ENCODE measurements at regions of chr5 and their contacts with region 1.

Region 1: GRCh38 chr5:175873088-175873454 is 1.7 kb downstream of the CPLX2 start:
- DNase-seq: peak; percentile 84
- ATAC-seq: peak; percentile 33
- H3K4me3 Mint-ChIP-seq: peak overlapping the region; percentile 64
- H3K27ac Mint-ChIP-seq: no peak overlapping the region
- H3K4me1 Mint-ChIP-seq: peaks cover 41% of the 10 kb centered on the region
- H3K27me3 Mint-ChIP-seq: peaks cover 32% of the 10 kb centered on the region
- CTCF ChIP-seq: peak; percentile 30; the same call in 1 of the 2 replicates

Region 2: GRCh38 chr5:175638305-175638704 is 234.8 kb before region 1 on chr5:
- CTCF ChIA-PET with region 1: no interaction called
- POLR2A ChIA-PET with region 1: no interaction called
- DNase-seq: no peak
- ATAC-seq: peak; percentile 78
- H3K4me3 Mint-ChIP-seq: no peak overlapping the region
- H3K27ac Mint-ChIP-seq: peak overlapping the region; percentile 42
- H3K4me1 Mint-ChIP-seq: peaks cover 47% of the 10 kb centered on the region
- H3K27me3 Mint-ChIP-seq: no peaks in the 10 kb centered on the region; the same call in 1 of the 2 replicates
- CTCF ChIP-seq: no peak

Region 3: DNA sequence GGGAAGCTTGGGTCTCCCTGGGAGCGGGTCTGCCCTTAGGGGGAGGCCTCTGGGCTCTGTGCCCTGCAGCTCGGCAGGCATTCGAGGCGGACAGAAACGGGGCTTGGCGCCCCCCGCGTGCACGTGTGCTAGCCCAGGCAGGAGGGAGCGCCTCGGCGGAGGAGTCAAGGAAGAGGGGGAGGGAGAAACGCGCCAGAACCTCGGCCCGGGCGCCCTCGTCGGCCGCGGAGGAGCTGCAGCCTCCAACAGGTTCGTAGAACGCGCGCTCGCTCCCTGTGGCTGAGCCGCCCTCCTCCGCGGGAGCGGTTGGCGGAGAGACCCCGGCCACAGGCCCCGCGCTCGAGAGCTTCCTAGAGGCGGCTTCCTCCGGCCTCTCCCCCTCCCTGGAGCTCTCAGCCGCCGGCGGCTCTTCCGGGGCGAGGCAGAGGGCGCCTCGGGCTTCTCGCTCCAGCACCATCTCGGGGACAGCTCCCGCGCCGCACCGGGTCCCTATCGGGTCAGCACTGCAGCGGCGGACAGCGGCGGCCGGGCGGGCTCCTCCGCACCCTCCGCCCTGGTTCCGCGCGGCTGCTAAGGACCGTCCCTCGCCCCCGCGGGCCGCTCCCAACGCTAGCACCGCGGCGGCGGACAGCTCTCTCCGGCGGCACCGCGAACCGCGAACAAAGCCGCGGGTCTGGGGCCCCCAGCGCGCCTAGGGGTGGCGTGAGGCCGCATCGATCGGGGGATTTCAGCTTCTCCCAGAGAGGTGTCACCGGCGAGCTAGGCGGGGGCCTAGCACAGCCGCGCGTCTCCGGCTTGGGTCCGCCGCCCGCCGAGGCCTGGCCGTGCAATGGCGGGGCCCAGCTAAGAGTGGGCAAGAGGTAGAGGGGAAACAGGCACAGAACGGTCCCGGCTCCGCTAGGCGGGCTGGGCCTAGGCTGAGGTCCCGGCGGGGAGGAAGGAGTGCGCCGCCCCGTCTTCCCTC is 76.3 kb before region 1 on chr5:
- CTCF ChIA-PET with region 1: interaction called, 62 read pairs
- POLR2A ChIA-PET with region 1: interaction called, 7 read pairs
- DNase-seq: peak; percentile 94
- ATAC-seq: peak; percentile 88
- H3K4me3 Mint-ChIP-seq: peak overlapping the region; percentile 80
- H3K27ac Mint-ChIP-seq: no peak overlapping the region
- H3K4me1 Mint-ChIP-seq: peaks cover 33% of the 10 kb centered on the region
- H3K27me3 Mint-ChIP-seq: peaks cover 35% of the 10 kb centered on the region
- CTCF ChIP-seq: no peak

Region 4: GRCh38 chr5:175840050-175840841 is 32.8 kb before region 1 on chr5:
- CTCF ChIA-PET with region 1: interaction called, 13 read pairs
- POLR2A ChIA-PET with region 1: no interaction called
- DNase-seq: no peak
- ATAC-seq: no peak
- H3K4me3 Mint-ChIP-seq: no peak overlapping the region
- H3K27ac Mint-ChIP-seq: no peak overlapping the region
- H3K4me1 Mint-ChIP-seq: peaks cover 32% of the 10 kb centered on the region
- H3K27me3 Mint-ChIP-seq: no peaks in the 10 kb centered on the region
- CTCF ChIP-seq: peak; percentile 85

Region 5: DNA sequence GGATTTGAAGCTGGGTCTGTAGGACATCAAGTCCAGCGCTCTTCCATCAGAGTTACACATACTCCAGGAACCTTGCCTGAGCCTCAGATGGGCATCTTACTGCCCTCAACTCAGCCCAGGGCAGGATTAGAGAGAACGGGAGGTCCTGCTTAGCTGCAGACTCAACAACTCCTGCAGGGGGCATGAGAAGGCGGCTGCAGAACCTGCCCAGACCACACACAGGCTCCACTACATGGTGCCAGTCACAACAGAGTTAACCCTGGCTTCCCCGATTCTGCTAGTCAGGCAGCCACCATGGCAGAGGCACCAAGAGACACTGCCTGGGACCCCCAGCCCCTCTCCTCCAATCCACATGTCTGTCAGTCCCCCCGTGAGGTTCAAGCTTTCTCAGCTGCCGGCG is 25.6 kb before region 1 on chr5:
- CTCF ChIA-PET with region 1: interaction called, 24 read pairs
- POLR2A ChIA-PET with region 1: no interaction called
- DNase-seq: peak; percentile 49
- ATAC-seq: peak; percentile 90
- H3K4me3 Mint-ChIP-seq: no peak overlapping the region
- H3K27ac Mint-ChIP-seq: no peak overlapping the region
- H3K4me1 Mint-ChIP-seq: peaks cover 21% of the 10 kb centered on the region
- H3K27me3 Mint-ChIP-seq: no peaks in the 10 kb centered on the region
- CTCF ChIP-seq: peak; percentile 15; the same call in 1 of the 2 replicates

Region 6: GRCh38 chr5:175856408-175857100 is 16.5 kb before region 1 on chr5:
- CTCF ChIA-PET with region 1: interaction called, 11 read pairs
- POLR2A ChIA-PET with region 1: interaction called, 3 read pairs
- DNase-seq: no peak
- ATAC-seq: no peak
- H3K4me3 Mint-ChIP-seq: no peak overlapping the region
- H3K27ac Mint-ChIP-seq: no peak overlapping the region
- H3K4me1 Mint-ChIP-seq: peaks cover 14% of the 10 kb centered on the region
- H3K27me3 Mint-ChIP-seq: no peaks in the 10 kb centered on the region; the same call in 1 of the 2 replicates
- CTCF ChIP-seq: no peak

Region 7: GRCh38 chr5:175885813-175886212 is 12.7 kb after region 1 on chr5:
- CTCF ChIA-PET with region 1: interaction called, 21 read pairs
- POLR2A ChIA-PET with region 1: no interaction called
- DNase-seq: no peak
- ATAC-seq: no peak
- H3K4me3 Mint-ChIP-seq: no peak overlapping the region
- H3K27ac Mint-ChIP-seq: no peak overlapping the region
- H3K4me1 Mint-ChIP-seq: peaks cover 13% of the 10 kb centered on the region
- H3K27me3 Mint-ChIP-seq: no peaks in the 10 kb centered on the region
- CTCF ChIP-seq: no peak